Activated CD8-positive, alpha-beta T cell treated with anti-CD3 and anti-CD28 coated beads, Interleukin-2, amount 10 ng/mL, durations not matched to agents 7 days and 5 days (primary cell): ENCODE measurements at regions of chr19 and their contacts with region 1.

Region 1: GRCh38 chr19:18831524-18832305 is at the start of gene UPF1:
- DNase-seq: peak; percentile 97
- ATAC-seq: peak; percentile 89
- H3K4me3 Mint-ChIP-seq: peak within 1 kb of the TSS; percentile 96
- H3K27ac Mint-ChIP-seq: peak within 1 kb of the TSS; percentile 89
- H3K4me1 Mint-ChIP-seq: peaks cover 39% of the 10 kb centered on the region
- H3K27me3 Mint-ChIP-seq: peaks cover 6% of the 10 kb centered on the region
- total RNA-seq, gene UPF1: 81.8 to 84.0 TPM

Region 2: GRCh38 chr19:18895038-18895823 is 63.5 kb after region 1 on chr19:
- CTCF ChIA-PET with region 1: no interaction called
- POLR2A ChIA-PET with region 1: no interaction called
- DNase-seq: no peak
- ATAC-seq: no peak
- H3K4me3 Mint-ChIP-seq: no peak overlapping the region
- H3K27ac Mint-ChIP-seq: no peak overlapping the region
- H3K4me1 Mint-ChIP-seq: peaks cover 12% of the 10 kb centered on the region
- H3K27me3 Mint-ChIP-seq: peaks cover 29% of the 10 kb centered on the region

Region 3: DNA sequence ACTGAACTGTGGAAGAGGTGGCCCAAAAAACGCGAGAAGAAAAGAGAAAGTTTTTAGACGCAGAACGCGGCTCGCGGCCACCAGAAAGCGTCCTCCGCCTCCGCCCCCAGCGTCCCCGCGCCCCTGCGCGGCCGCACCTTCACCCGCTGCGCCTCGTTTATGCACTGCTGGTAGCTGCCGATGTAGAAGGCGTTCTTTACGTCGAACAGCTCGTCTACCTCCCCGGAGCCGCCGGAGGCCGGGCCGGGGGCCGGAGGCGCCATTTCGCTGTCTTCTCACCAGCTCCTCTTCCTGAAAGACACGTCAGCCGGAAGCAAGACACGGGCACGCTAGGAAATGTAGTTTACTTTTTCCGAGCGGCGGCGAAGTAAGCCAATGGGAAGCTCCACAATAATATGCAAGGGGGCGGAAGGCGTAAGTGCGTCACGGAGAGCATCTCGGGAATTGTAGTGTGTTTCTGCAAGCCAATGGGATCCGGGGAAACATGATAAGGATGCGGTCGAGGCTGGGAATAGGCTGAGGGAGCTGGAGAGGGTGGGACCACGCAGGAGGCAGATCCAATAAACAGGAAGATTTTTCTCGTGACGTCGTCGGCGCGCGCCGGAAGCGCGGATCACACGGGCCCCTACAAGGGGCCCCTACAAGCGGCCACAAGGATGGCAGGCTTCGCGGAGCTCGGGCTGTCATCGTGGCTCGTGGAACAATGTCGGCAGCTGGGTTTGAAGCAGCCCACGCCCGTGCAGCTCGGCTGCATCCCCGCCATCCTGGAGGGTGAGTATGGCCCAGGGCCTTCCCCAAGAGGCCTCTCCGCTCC is 87.6 kb after region 1 on chr19 and contains the starts of genes COPE and DDX49:
- CTCF ChIA-PET with region 1: no interaction called
- POLR2A ChIA-PET with region 1: interaction called, 14 read pairs
- DNase-seq: peak; percentile 99
- ATAC-seq: peak; percentile 96
- H3K4me3 Mint-ChIP-seq: peak within 1 kb of the TSS; percentile 90
- H3K27ac Mint-ChIP-seq: peak within 1 kb of the TSS; percentile 93
- H3K4me1 Mint-ChIP-seq: peaks cover 29% of the 10 kb centered on the region
- H3K27me3 Mint-ChIP-seq: no peaks in the 10 kb centered on the region
- total RNA-seq, gene COPE: 248 to 264 TPM
- total RNA-seq, gene DDX49: 56.1 to 57.3 TPM